Panc1 (cell line): ENCODE measurements at regions of chr12 and their contacts with region 1.

Region 1: GRCh38 chr12:48069241-48069640 is 36.6 kb downstream of the SENP1 start:
- DNase-seq: no peak
- ATAC-seq: no peak
- H3K4me3 ChIP-seq: no peak overlapping the region
- H3K27ac ChIP-seq: no peak overlapping the region
- H3K4me1 ChIP-seq: no peaks in the 10 kb centered on the region
- H3K27me3 ChIP-seq: no peaks in the 10 kb centered on the region
- CTCF ChIP-seq: no peak

Region 2: GRCh38 chr12:48017921-48018617 is 51.2 kb before region 1 on chr12:
- CTCF ChIA-PET with region 1: no interaction called
- POLR2A ChIA-PET with region 1: interaction called, 12 read pairs
- in situ Hi-C with region 1: no loop called
- intact Hi-C with region 1: no loop called
- DNase-seq: no peak
- ATAC-seq: no peak
- H3K4me3 ChIP-seq: no peak overlapping the region
- H3K27ac ChIP-seq: no peak overlapping the region
- H3K4me1 ChIP-seq: peaks cover 14% of the 10 kb centered on the region
- H3K27me3 ChIP-seq: peaks cover 16% of the 10 kb centered on the region; the same call in 1 of the 2 replicates
- CTCF ChIP-seq: no peak

Region 3: GRCh38 chr12:48601013-48601756 is 531.9 kb after region 1 on chr12:
- CTCF ChIA-PET with region 1: no interaction called
- POLR2A ChIA-PET with region 1: no interaction called
- in situ Hi-C with region 1: no loop called
- intact Hi-C with region 1: no loop called
- DNase-seq: no peak
- ATAC-seq: no peak
- H3K4me3 ChIP-seq: no peak overlapping the region
- H3K27ac ChIP-seq: no peak overlapping the region
- H3K4me1 ChIP-seq: no peaks in the 10 kb centered on the region
- H3K27me3 ChIP-seq: peaks cover 11% of the 10 kb centered on the region
- CTCF ChIP-seq: no peak